ENCODE measurements at regions of chr11 and their contacts with region 1.

Region 1: DNA sequence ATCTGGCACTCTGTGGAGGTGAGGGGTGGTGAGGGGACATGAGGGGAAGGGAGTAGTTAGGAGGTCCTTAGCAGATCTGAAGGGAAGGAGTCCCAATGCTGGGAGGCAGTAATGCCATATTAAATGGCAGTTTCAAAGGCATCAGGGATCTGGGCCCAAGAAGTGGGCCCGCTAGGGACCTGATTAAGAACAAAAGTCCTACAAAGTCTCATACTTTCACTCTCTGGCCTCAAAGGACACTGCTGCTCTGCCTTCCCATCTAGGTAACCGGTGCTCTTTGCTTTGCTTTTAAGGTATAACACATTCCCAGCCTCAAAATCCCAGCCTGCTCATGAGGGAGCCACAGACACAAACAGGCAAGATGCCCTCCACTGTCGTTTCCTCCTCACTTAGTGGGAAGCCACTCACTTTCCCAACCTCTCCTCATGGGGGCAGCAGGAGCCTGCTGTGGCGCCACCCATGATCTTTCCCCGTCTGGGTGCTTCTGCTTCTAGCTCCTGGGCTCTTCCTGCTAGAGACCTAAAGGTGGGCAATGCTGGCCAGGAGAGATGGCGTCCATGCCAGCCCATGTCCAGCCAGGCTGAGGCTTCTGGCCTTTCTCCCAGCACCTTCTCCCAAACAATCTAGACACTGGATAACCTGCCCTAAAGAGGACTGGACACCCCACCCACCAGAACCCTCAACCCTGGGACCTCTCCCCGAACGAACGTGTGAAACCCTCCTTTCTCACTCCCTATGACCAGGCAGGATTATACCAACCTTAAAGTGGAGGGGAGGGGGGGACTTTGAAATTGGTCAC is 68.3 kb downstream of the PLEKHA7 start:
- DNase-seq: peak; percentile 2
- H3K4me3 ChIP-seq: no peak overlapping the region
- CTCF ChIP-seq: peak; percentile 56

Region 2: GRCh38 chr11:16935518-16936302 is 10.2 kb before region 1 on chr11:
- CTCF ChIA-PET with region 1: interaction called, 17 read pairs
- POLR2A ChIA-PET with region 1: no interaction called
- DNase-seq: no peak
- H3K4me3 ChIP-seq: no peak overlapping the region
- CTCF ChIP-seq: peak; percentile 68

Measured in AG04449 (cell line).